ENCODE measurements at regions of chr4 and their contacts with region 1.

Region 1: GRCh38 chr4:184474263-184475095 is at the start of gene IRF2:
- DNase-seq: peak; percentile 93
- ATAC-seq: peak; percentile 75
- H3K4me3 ChIP-seq: peak within 1 kb of the TSS; percentile 99
- H3K27ac ChIP-seq: peak within 1 kb of the TSS; percentile 92
- H3K4me1 ChIP-seq: peaks cover 14% of the 10 kb centered on the region
- H3K27me3 ChIP-seq: no peaks in the 10 kb centered on the region
- CTCF ChIP-seq: no peak
- EP300 ChIP-seq: peak; percentile 51; a peak in 3 of 4 replicates
- POLR2A ChIP-seq: peak; percentile 87
- RAD21 ChIP-seq: peak; percentile 47; the same call in 1 of the 2 replicates
- polyA plus RNA-seq, gene IRF2: 58.4 to 59.9 TPM

Region 2: GRCh38 chr4:184310171-184310567 is 164.3 kb before region 1 on chr4:
- CTCF ChIA-PET with region 1: interaction called, 4 read pairs
- POLR2A ChIA-PET with region 1: interaction called, 5 read pairs
- RAD21 ChIA-PET with region 1: interaction called, 5 read pairs
- SMC1A ChIA-PET with region 1: interaction called, 3 read pairs
- in situ Hi-C with region 1: no loop called
- intact Hi-C with region 1: loop called (anchors 1 kb)
- DNase-seq: no peak
- ATAC-seq: peak; percentile 61
- H3K4me3 ChIP-seq: peak overlapping the region; percentile 75; the same call in 1 of the 2 replicates
- H3K27ac ChIP-seq: peak overlapping the region; percentile 94
- H3K4me1 ChIP-seq: peaks cover 47% of the 10 kb centered on the region
- H3K27me3 ChIP-seq: no peaks in the 10 kb centered on the region
- CTCF ChIP-seq: peak; percentile 49 to 59 (median 49)
- EP300 ChIP-seq: no peak
- POLR2A ChIP-seq: peak; percentile 33; the same call in 1 of the 2 replicates
- RAD21 ChIP-seq: peak; percentile 65

Region 3: GRCh38 chr4:184349283-184350039 is 125.0 kb before region 1 on chr4:
- CTCF ChIA-PET with region 1: interaction called, 11 read pairs
- POLR2A ChIA-PET with region 1: interaction called, 12 read pairs
- RAD21 ChIA-PET with region 1: interaction called, 11 read pairs
- SMC1A ChIA-PET with region 1: interaction called, 14 read pairs
- in situ Hi-C with region 1: loop called (anchors 5 kb)
- intact Hi-C with region 1: loop called (anchors 1 kb)
- DNase-seq: no peak
- ATAC-seq: no peak
- H3K4me3 ChIP-seq: peak overlapping the region; percentile 89
- H3K27ac ChIP-seq: peak overlapping the region; percentile 99
- H3K4me1 ChIP-seq: peaks cover 50% of the 10 kb centered on the region
- H3K27me3 ChIP-seq: no peaks in the 10 kb centered on the region
- CTCF ChIP-seq: no peak
- EP300 ChIP-seq: no peak
- POLR2A ChIP-seq: no peak
- RAD21 ChIP-seq: no peak

Region 4: DNA sequence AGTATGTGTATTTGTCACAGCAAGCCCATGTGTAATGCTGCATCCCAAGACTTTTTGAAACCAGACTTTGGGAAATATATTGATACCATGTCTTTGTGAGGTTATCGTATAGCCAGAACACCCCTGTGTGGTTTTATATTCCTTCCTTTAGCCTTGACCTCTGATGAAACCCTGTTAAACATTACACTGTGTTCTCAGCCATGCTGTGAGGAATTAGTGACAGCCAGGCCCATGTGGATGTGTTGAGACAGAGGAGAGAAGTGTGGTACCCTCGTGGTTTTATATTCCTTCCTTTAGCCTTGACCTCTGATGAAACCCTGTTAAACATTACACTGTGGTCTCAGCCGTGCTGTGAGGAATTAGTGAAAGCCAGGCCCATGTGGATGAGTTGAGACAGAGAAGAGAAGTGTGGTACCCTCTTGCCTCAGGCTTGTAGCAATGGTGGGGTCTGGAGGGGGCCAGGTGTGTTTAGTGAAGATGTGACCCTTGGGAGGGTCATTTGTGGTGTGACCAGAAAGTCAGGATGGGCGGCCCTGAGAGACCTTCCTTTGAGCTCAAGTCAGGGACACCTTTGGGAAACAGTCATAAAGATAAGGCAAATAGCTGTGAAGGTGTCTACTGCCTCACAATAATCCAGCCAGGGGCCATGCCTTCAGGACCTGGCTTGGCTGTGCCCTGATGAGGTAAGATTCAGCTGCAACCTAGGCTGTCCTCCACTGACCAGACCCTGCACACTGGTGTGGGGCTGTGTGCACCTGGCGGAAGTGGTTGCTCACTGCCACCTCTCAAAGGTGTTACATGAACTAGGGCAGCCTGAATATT is 110.2 kb before region 1 on chr4:
- CTCF ChIA-PET with region 1: no interaction called
- POLR2A ChIA-PET with region 1: no interaction called
- RAD21 ChIA-PET with region 1: no interaction called
- SMC1A ChIA-PET with region 1: no interaction called
- in situ Hi-C with region 1: no loop called
- intact Hi-C with region 1: no loop called
- DNase-seq: no peak
- ATAC-seq: peak; percentile 85
- H3K4me3 ChIP-seq: no peak overlapping the region
- H3K27ac ChIP-seq: no peak overlapping the region
- H3K4me1 ChIP-seq: no peaks in the 10 kb centered on the region
- H3K27me3 ChIP-seq: no peaks in the 10 kb centered on the region
- CTCF ChIP-seq: no peak
- EP300 ChIP-seq: no peak
- POLR2A ChIP-seq: no peak
- RAD21 ChIP-seq: no peak

Region 5: DNA sequence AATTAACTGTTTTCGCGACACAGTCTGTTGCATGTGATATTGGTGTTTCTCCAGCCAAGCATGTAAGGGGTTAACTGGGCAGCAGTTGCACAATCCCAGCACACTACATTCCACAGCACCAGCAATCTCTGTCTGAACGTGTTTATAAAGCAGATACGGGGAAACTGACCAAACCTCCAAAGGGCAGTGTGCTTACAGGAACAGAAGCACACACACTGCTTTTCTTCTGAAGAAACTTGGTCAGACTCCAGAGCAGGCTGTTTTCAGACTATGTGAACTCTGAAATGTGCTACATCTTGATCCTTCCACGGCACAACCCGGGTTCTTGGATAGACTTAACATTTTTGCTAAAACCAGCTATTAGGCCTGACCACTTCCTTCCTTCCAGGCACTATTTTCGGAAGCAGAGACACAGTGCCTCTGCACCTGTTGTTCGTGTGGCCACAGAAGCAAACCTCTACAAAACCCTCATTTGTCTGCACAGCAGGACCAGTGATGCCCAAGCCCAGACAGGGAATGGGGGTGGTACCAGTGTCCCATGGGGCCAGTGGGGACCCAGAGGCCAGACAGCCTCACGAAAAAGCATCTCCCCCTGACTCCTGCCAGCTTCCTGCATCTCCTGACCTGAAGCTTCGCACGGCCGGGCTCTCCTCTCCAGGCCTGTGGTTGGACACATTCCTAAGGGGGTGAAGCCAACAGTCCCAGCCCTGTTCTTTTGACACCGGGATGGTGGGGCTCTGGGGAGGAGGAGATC is 90.2 kb before region 1 on chr4:
- CTCF ChIA-PET with region 1: no interaction called
- POLR2A ChIA-PET with region 1: interaction called, 5 read pairs
- RAD21 ChIA-PET with region 1: interaction called, 5 read pairs
- SMC1A ChIA-PET with region 1: interaction called, 4 read pairs
- in situ Hi-C with region 1: no loop called
- intact Hi-C with region 1: loop called (anchors 2 kb)
- DNase-seq: peak; percentile 92
- ATAC-seq: peak; percentile 77
- H3K4me3 ChIP-seq: peak overlapping the region; percentile 59; the same call in 1 of the 2 replicates
- H3K27ac ChIP-seq: peak overlapping the region; percentile 88
- H3K4me1 ChIP-seq: peaks cover 68% of the 10 kb centered on the region
- H3K27me3 ChIP-seq: no peaks in the 10 kb centered on the region
- CTCF ChIP-seq: no peak
- EP300 ChIP-seq: peak; percentile 76 to 86
- POLR2A ChIP-seq: peak; percentile 70
- RAD21 ChIP-seq: no peak

Region 6: DNA sequence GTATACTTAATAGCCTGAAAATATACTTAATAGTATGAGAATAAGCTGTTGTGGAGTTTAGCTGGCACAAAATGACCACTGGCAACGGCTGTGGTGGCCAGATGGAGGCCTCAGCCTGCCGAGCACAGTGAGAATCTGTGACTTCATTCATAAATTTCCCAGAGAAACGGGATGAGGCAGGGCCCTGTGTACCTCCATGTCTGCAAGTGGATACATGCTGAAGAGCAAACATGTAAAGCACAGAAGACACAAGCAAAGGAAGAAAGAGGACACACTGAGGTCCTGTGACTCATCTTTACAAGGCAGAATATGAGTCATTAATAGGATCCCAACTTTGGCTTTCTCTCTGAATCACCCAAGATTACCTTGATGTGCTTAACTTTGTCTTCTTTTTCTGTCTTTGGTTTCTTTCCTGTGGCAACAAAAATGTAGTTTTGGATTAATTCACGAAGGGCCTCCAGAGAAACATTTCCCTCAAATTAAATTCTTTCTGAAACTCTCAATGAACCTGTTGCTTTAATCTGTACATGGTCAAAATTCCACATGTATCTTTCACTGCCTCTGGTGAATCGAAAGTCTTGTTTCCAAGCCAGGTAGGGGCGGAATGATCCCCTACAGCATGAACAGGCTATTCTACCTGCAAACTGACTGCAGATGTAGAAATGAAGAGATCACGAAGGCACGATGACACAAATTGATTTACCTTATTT is 56.5 kb before region 1 on chr4:
- CTCF ChIA-PET with region 1: interaction called, 3 read pairs
- POLR2A ChIA-PET with region 1: interaction called, 4 read pairs
- RAD21 ChIA-PET with region 1: interaction called, 9 read pairs
- SMC1A ChIA-PET with region 1: interaction called, 7 read pairs
- in situ Hi-C with region 1: no loop called
- intact Hi-C with region 1: loop called (anchors 1 kb)
- DNase-seq: peak; percentile 78
- ATAC-seq: peak; percentile 72
- H3K4me3 ChIP-seq: no peak overlapping the region
- H3K27ac ChIP-seq: peak overlapping the region; percentile 90
- H3K4me1 ChIP-seq: peaks cover 64% of the 10 kb centered on the region
- H3K27me3 ChIP-seq: no peaks in the 10 kb centered on the region
- CTCF ChIP-seq: no peak
- EP300 ChIP-seq: peak in 1 of 2 experiments; percentile 75; a peak in 1 of 4 replicates
- POLR2A ChIP-seq: 0 out of 2 replicates have a peak, but pooled peaks have one; percentile 23
- RAD21 ChIP-seq: no peak

Region 7: GRCh38 chr4:184506527-184507121 is 32.1 kb after region 1 on chr4:
- CTCF ChIA-PET with region 1: interaction called, 4 read pairs
- POLR2A ChIA-PET with region 1: interaction called, 4 read pairs
- RAD21 ChIA-PET with region 1: interaction called, 10 read pairs
- SMC1A ChIA-PET with region 1: interaction called, 22 read pairs
- in situ Hi-C with region 1: no loop called
- intact Hi-C with region 1: no loop called
- DNase-seq: peak; percentile 78
- ATAC-seq: peak; percentile 100
- H3K4me3 ChIP-seq: no peak overlapping the region
- H3K27ac ChIP-seq: peak overlapping the region; percentile 60
- H3K4me1 ChIP-seq: peaks cover 30% of the 10 kb centered on the region
- H3K27me3 ChIP-seq: no peaks in the 10 kb centered on the region
- CTCF ChIP-seq: peak in 2 of 3 experiments; percentile 47 to 61; a peak in 3 of 6 replicates
- EP300 ChIP-seq: peak in 1 of 2 experiments; percentile 27; a peak in 1 of 4 replicates
- POLR2A ChIP-seq: 0 out of 2 replicates have a peak, but pooled peaks have one; percentile 44
- RAD21 ChIP-seq: 0 out of 2 replicates have a peak, but pooled peaks have one; percentile 9

Region 8: GRCh38 chr4:184548648-184549341 is 74.3 kb after region 1 on chr4:
- CTCF ChIA-PET with region 1: no interaction called
- POLR2A ChIA-PET with region 1: no interaction called
- RAD21 ChIA-PET with region 1: no interaction called
- SMC1A ChIA-PET with region 1: no interaction called
- in situ Hi-C with region 1: no loop called
- intact Hi-C with region 1: no loop called
- DNase-seq: no peak
- ATAC-seq: no peak
- H3K4me3 ChIP-seq: no peak overlapping the region
- H3K27ac ChIP-seq: no peak overlapping the region
- H3K4me1 ChIP-seq: no peaks in the 10 kb centered on the region
- H3K27me3 ChIP-seq: no peaks in the 10 kb centered on the region
- CTCF ChIP-seq: no peak
- EP300 ChIP-seq: no peak
- POLR2A ChIP-seq: no peak
- RAD21 ChIP-seq: no peak

Region 9: GRCh38 chr4:184649026-184649970 is 174.8 kb after region 1 on chr4 and contains the starts of genes CASP3 and PRIMPOL:
- CTCF ChIA-PET with region 1: no interaction called
- POLR2A ChIA-PET with region 1: no interaction called
- RAD21 ChIA-PET with region 1: no interaction called
- SMC1A ChIA-PET with region 1: no interaction called
- in situ Hi-C with region 1: no loop called
- intact Hi-C with region 1: loop called (anchors 2 kb)
- DNase-seq: peak; percentile 60
- ATAC-seq: peak; percentile 90
- H3K4me3 ChIP-seq: peak within 1 kb of the TSS; percentile 98
- H3K27ac ChIP-seq: peak within 1 kb of the TSS; percentile 85
- H3K4me1 ChIP-seq: peaks cover 12% of the 10 kb centered on the region; the same call in 1 of the 2 replicates
- H3K27me3 ChIP-seq: no peaks in the 10 kb centered on the region
- CTCF ChIP-seq: peak in 2 of 3 experiments; percentile 26 to 43; a peak in 3 of 6 replicates
- EP300 ChIP-seq: no peak
- POLR2A ChIP-seq: peak; percentile 93
- RAD21 ChIP-seq: peak; percentile 28
- polyA plus RNA-seq, gene CASP3: 50.0 to 59.0 TPM
- polyA plus RNA-seq, gene PRIMPOL: 10.6 to 11.5 TPM

Measured in GM12878 (cell line).